SK-N-SH (cell line): ENCODE measurements at regions of chr14 and their contacts with region 1.

Region 1: DNA sequence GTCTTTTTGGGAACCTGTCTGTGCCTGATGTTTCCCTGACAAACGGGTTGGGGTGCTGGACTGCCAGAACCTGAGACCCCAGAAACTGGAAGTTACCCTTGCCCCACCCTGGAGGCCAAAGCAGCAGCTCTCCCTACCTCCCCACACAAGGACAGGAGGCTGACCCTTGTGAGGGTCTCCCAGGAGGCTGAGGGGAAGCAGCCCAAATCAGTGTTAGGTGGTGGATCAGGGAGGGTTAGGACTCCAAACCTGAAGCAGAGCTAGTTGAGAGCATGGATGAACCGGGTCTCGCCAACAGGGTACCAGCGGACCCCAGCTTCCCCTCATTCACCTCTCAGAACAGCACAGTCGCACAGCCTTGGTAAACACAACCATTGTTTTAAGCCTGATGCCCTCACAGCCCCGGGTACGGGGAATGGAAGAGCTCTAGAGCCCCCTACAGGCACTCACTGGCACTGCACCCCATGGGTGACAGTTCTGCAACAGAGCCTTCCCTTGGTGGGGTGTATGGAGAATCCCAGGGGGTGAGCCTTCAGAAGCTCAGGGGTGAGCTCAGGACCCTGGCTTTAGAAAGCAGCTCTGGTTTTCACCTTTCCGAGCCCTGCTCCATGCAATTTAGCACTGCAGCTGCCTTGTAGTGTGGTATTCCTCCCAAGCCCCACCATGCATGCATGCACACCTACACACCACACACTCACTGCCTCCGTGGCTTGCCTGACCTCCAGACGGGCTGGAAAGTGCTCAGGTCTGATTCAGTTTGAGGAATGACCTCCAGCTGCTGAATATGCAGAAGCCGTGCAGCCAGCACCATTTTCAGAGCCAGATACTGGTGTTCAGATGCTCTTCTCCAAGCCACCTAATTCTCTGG is 11.2 kb downstream of the ESRRB start:
- DNase-seq: peak; percentile 90
- H3K4me3 ChIP-seq: peak overlapping the region in 1 of 2 experiments; percentile 50; a peak in 1 of 4 replicates
- H3K27ac ChIP-seq: no peak overlapping the region
- H3K4me1 ChIP-seq: no peaks in the 10 kb centered on the region; a peak in 1 of 4 replicates
- H3K27me3 ChIP-seq: peaks cover 46% of the 10 kb centered on the region
- CTCF ChIP-seq: peak; percentile 97
- EP300 ChIP-seq: no peak
- RAD21 ChIP-seq: peak; percentile 95

Region 2: GRCh38 chr14:75697386-75697785 is 689.8 kb before region 1 on chr14:
- CTCF ChIA-PET with region 1: no interaction called
- POLR2A ChIA-PET with region 1: no interaction called
- DNase-seq: no peak
- H3K4me3 ChIP-seq: no peak overlapping the region
- H3K27ac ChIP-seq: no peak overlapping the region
- H3K4me1 ChIP-seq: no peaks in the 10 kb centered on the region; a peak in 1 of 4 replicates
- H3K27me3 ChIP-seq: no peaks in the 10 kb centered on the region
- CTCF ChIP-seq: no peak
- EP300 ChIP-seq: no peak
- RAD21 ChIP-seq: no peak

Region 3: GRCh38 chr14:76056128-76056527 is 331.0 kb before region 1 on chr14:
- CTCF ChIA-PET with region 1: interaction called, 63 read pairs
- POLR2A ChIA-PET with region 1: no interaction called
- DNase-seq: no peak
- H3K4me3 ChIP-seq: no peak overlapping the region
- H3K27ac ChIP-seq: no peak overlapping the region
- H3K4me1 ChIP-seq: peaks cover 0 to 11% of the 10 kb centered on the region in 2 experiments; a peak in 2 of 4 replicates
- H3K27me3 ChIP-seq: no peaks in the 10 kb centered on the region
- CTCF ChIP-seq: peak; percentile 39; the same call in 1 of the 2 replicates
- EP300 ChIP-seq: no peak
- RAD21 ChIP-seq: no peak

Region 4: GRCh38 chr14:76067536-76067935 is 319.6 kb before region 1 on chr14:
- CTCF ChIA-PET with region 1: interaction called, 11 read pairs
- POLR2A ChIA-PET with region 1: no interaction called
- DNase-seq: no peak
- H3K4me3 ChIP-seq: no peak overlapping the region
- H3K27ac ChIP-seq: no peak overlapping the region
- H3K4me1 ChIP-seq: no peaks in the 10 kb centered on the region
- H3K27me3 ChIP-seq: no peaks in the 10 kb centered on the region
- CTCF ChIP-seq: no peak
- EP300 ChIP-seq: no peak
- RAD21 ChIP-seq: no peak

Region 5: GRCh38 chr14:76073717-76074116 is 313.4 kb before region 1 on chr14:
- CTCF ChIA-PET with region 1: interaction called, 11 read pairs
- POLR2A ChIA-PET with region 1: no interaction called
- DNase-seq: peak; percentile 82
- H3K4me3 ChIP-seq: no peak overlapping the region
- H3K27ac ChIP-seq: no peak overlapping the region
- H3K4me1 ChIP-seq: peaks cover 0 to 17% of the 10 kb centered on the region in 2 experiments; a peak in 2 of 4 replicates
- H3K27me3 ChIP-seq: no peaks in the 10 kb centered on the region
- CTCF ChIP-seq: no peak
- EP300 ChIP-seq: peak in 1 of 2 experiments; percentile 82; a peak in 2 of 4 replicates
- RAD21 ChIP-seq: no peak

Region 6: GRCh38 chr14:76219873-76220272 is 167.3 kb before region 1 on chr14:
- CTCF ChIA-PET with region 1: no interaction called
- POLR2A ChIA-PET with region 1: no interaction called
- DNase-seq: no peak
- H3K4me3 ChIP-seq: no peak overlapping the region
- H3K27ac ChIP-seq: no peak overlapping the region
- H3K4me1 ChIP-seq: no peaks in the 10 kb centered on the region
- H3K27me3 ChIP-seq: no peaks in the 10 kb centered on the region
- CTCF ChIP-seq: no peak
- EP300 ChIP-seq: no peak
- RAD21 ChIP-seq: no peak

Region 7: DNA sequence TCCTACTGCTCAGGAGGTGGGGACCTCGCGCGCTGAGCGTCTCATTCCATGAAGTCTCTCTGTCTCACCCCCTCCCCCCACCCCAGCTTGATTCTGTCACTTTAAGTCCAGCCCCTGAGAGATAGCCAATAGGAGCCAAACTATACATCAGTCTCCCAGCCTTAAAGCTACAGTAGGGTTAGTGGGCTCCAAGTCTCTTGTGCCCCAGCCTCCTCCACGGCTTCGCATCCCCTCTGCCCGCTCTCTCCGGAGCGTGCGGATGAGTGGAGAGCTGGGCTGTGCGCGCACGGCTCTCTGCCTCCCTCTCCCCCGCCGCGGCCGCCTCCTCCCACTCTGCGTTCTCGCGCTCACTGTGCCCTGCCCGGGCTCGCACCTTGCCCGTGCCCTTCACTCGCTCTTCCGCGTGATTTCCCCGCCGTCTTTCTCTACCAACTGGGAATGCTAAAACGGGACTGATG is 11.2 kb before region 1 on chr14 and contains the start of gene ESRRB:
- CTCF ChIA-PET with region 1: interaction called, 21 read pairs
- POLR2A ChIA-PET with region 1: no interaction called
- DNase-seq: peak; percentile 54
- H3K4me3 ChIP-seq: peak within 1 kb of the TSS; percentile 42 to 55
- H3K27ac ChIP-seq: no peak within 1 kb of the TSS
- H3K4me1 ChIP-seq: peaks cover 3 to 7% of the 10 kb centered on the region in 2 experiments; a peak in 2 of 4 replicates
- H3K27me3 ChIP-seq: peaks cover 85% of the 10 kb centered on the region
- CTCF ChIP-seq: no peak
- EP300 ChIP-seq: no peak
- RAD21 ChIP-seq: no peak
- polyA plus RNA-seq, gene ESRRB: 0.05 and 0.06 TPM in 2 replicates

Region 8: GRCh38 chr14:76647697-76648298 is 260.6 kb after region 1 on chr14:
- CTCF ChIA-PET with region 1: interaction called, 39 read pairs
- POLR2A ChIA-PET with region 1: no interaction called
- DNase-seq: peak; percentile 62
- H3K4me3 ChIP-seq: no peak overlapping the region
- H3K27ac ChIP-seq: no peak overlapping the region
- H3K4me1 ChIP-seq: peaks cover 0 to 9% of the 10 kb centered on the region in 2 experiments; a peak in 1 of 4 replicates
- H3K27me3 ChIP-seq: no peaks in the 10 kb centered on the region
- CTCF ChIP-seq: peak; percentile 83
- EP300 ChIP-seq: no peak
- RAD21 ChIP-seq: peak; percentile 78